Mammary epithelial cell (primary cell): ENCODE measurements at regions of chr1 and their contacts with region 1.

Region 1: DNA sequence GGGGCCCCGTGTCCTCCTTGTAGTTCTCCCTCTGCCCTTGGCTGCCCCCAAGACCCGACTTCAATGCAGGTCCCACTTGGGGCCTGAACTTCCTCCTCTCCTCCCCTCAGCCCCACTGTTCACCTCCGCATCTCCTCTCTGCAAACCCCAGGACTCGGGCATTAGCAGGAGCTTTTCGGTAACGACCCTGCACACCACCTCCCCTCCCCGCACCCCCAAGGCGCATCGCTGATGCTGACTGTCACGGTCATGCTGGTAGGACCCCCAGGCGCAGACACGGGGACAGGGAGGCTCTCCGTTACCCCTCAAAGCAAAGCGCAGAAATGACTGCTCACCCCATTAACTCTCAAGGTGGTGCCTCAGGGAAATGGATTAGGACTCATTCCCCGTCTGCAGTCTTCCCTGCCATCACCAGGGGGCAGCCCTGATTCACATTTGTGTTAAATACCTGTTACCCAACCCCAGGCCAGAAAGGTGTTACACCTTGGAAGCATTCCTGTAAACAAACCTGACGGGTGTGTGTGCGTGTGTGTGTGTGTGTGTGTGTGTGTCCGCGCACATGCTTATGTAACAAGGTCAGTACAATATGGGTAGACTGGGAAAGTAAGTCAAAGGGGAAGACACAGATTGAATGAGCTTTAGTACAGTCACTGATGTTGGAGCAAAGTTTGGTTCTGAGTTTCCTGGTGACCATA is 6.4 kb upstream of the GUCA2B start:
- DNase-seq: peak; percentile 79
- H3K4me3 ChIP-seq: peak overlapping the region in 1 of 3 experiments; percentile 11
- H3K27ac ChIP-seq: no peak overlapping the region
- H3K4me1 ChIP-seq: peaks cover 20% of the 10 kb centered on the region
- H3K27me3 ChIP-seq: no peaks in the 10 kb centered on the region
- CTCF ChIP-seq: peak; percentile 91 to 98

Region 2: GRCh38 chr1:41898191-41898713 is 248.5 kb before region 1 on chr1:
- CTCF ChIA-PET with region 1: no interaction called
- dilution Hi-C with region 1: no loop called
- in situ Hi-C with region 1: no loop called
- intact Hi-C with region 1: no loop called
- DNase-seq: no peak
- H3K4me3 ChIP-seq: no peak overlapping the region
- H3K27ac ChIP-seq: no peak overlapping the region
- H3K4me1 ChIP-seq: peaks cover 52% of the 10 kb centered on the region
- H3K27me3 ChIP-seq: no peaks in the 10 kb centered on the region
- CTCF ChIP-seq: no peak

Region 3: DNA sequence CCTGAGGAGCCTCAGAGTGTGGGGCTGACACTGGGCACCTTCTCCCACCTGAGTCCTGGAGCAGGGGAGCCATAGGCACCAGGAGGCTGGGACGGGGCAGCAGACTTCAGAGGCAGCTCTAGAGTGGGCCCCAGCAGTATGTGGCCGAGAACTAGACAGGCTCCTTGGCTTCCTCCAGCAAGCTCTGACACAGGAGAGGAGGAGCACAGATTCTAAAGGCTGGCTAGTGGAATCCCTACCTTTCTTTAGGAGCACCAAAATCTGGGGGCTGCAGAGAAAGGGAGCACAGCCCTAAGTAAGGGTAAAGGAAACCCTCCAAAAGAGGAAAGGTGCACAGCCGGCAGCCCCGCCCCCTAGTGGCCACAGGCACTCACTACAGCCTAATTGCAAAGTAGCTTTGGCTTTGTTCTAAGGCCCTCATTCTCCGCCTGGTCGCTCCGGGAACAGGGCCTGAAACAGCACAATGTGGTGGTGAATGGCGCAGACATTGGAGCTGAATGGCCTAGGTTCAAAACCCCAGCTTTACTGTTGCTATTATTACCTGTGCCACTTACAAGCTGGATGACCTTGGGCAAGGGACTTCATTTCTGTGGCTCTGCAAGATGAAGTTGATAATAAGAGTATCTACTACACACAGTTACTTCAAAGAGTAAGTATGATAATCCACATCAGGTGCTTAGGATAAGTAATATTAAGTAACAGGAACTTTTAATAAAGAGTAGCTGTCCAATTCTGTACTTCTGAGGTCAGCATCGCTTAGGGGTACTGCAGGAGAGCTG is 26.6 kb after region 1 on chr1:
- CTCF ChIA-PET with region 1: interaction called, 12 read pairs
- dilution Hi-C with region 1: no loop called
- in situ Hi-C with region 1: no loop called
- intact Hi-C with region 1: loop called (anchors 1 kb)
- DNase-seq: peak; percentile 35
- H3K4me3 ChIP-seq: peak overlapping the region in 2 of 3 experiments; percentile 0 to 7
- H3K27ac ChIP-seq: peak overlapping the region; percentile 66
- H3K4me1 ChIP-seq: peaks cover 56% of the 10 kb centered on the region
- H3K27me3 ChIP-seq: no peaks in the 10 kb centered on the region
- CTCF ChIP-seq: peak; percentile 96 to 99

Region 4: DNA sequence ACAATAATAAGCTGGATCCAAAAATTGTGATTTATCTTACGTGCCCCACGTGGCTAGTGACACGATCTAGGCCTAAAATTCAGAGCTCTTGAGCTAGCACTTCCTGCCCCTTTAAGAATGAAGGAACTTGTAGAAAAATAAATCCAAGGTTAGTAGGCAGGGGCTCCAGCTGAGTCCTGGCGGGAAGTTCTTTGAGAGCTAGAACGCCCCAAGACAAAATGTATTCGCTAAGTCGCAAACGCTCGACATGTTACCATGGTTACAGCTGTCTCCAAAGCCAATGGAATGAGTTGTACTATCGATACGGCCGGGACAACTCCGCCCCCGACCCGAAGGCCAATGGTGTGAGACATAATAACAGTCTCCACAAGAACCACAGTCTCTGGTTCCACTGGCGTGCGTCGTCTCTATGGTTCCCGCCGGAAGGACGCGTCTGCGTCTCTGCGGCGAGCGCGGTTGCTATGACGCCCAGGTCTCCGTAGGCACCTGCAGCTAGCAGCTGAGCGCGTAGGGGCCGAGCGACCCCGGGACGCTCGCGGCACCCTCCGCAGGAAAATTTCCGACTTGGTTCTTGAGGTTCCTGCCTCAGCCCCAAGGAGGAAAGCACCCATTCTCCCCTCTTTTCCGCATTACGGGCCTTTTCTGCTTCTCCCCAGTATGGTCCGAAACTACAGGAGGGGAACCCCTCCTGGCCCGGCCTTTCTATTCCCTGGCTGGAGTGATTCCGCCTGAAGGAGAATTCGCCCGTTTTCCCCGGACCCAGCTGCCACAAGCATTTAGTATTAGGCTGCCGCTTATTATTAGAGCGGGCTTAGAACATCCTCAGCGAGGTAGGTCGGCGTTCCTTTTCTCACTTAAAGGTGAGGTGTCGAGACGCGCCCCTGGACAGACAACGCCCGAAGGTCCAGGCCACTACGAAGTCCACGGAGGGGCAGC is 316.3 kb after region 1 on chr1 and contains the start of gene CCDC30:
- CTCF ChIA-PET with region 1: no interaction called
- dilution Hi-C with region 1: no loop called
- in situ Hi-C with region 1: no loop called
- intact Hi-C with region 1: loop called (anchors 5 kb)
- DNase-seq: peak; percentile 98
- H3K4me3 ChIP-seq: peak within 1 kb of the TSS; percentile 68 to 85 (median 70)
- H3K27ac ChIP-seq: peak within 1 kb of the TSS; percentile 94
- H3K4me1 ChIP-seq: peaks cover 10% of the 10 kb centered on the region
- H3K27me3 ChIP-seq: no peaks in the 10 kb centered on the region
- CTCF ChIP-seq: no peak
- total RNA-seq, gene CCDC30: 0.66 to 1.8 TPM

Region 5: GRCh38 chr1:42646056-42646455 is 499.3 kb after region 1 on chr1:
- CTCF ChIA-PET with region 1: no interaction called
- dilution Hi-C with region 1: no loop called
- in situ Hi-C with region 1: no loop called
- intact Hi-C with region 1: loop called (anchors 1 kb)
- DNase-seq: no peak
- H3K4me3 ChIP-seq: no peak overlapping the region
- H3K27ac ChIP-seq: no peak overlapping the region
- H3K4me1 ChIP-seq: no peaks in the 10 kb centered on the region
- H3K27me3 ChIP-seq: no peaks in the 10 kb centered on the region
- CTCF ChIP-seq: no peak

Region 6: GRCh38 chr1:42765832-42766740 is 619.3 kb after region 1 on chr1:
- CTCF ChIA-PET with region 1: interaction called, 35 read pairs
- dilution Hi-C with region 1: no loop called
- in situ Hi-C with region 1: no loop called
- intact Hi-C with region 1: no loop called
- DNase-seq: peak; percentile 60
- H3K4me3 ChIP-seq: peak overlapping the region; percentile 54 to 89 (median 83)
- H3K27ac ChIP-seq: peak overlapping the region; percentile 8
- H3K4me1 ChIP-seq: peaks cover 15% of the 10 kb centered on the region
- H3K27me3 ChIP-seq: no peaks in the 10 kb centered on the region
- CTCF ChIP-seq: peak; percentile 35 to 57